ENCODE measurements at regions of chr12 and their contacts with region 1.

Region 1: DNA sequence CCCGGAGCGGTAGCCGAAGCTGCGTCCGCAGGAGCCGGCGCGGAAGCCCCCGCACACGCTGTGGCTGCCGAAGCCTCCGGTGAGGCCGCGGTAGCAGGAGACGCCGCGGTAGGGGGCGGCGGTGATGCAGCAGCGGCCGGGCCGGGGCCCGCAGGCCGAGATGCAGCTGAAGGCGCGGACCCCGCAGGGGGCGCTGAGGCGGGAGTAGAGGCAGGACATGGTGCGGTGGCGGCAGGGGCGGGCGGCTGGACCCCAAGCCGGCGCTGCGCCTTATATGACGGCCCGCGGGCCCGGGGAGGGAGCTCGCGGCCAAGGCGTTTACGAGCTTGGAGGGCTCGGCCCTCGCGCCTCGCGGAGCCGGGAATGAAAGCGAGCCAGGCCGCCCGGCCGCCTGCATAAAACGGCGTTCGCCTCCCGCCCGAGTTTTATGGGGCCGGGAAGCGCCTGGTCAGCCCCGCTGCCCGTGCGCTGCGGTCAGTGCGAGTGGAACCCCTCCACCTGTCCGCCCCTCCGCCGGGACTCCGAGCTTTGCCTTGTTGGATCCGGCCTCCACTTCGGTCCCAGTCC is 16.0 kb upstream of the KRT86 start:
- DNase-seq: peak; percentile 82
- H3K4me3 ChIP-seq: peak overlapping the region in 1 of 2 experiments; percentile 17; a peak in 1 of 4 replicates
- H3K27ac ChIP-seq: no peak overlapping the region
- H3K4me1 ChIP-seq: peaks cover 3 to 16% of the 10 kb centered on the region in 2 experiments; a peak in 3 of 4 replicates
- H3K27me3 ChIP-seq: no peaks in the 10 kb centered on the region
- CTCF ChIP-seq: no peak
- EP300 ChIP-seq: no peak
- RAD21 ChIP-seq: no peak

Region 2: DNA sequence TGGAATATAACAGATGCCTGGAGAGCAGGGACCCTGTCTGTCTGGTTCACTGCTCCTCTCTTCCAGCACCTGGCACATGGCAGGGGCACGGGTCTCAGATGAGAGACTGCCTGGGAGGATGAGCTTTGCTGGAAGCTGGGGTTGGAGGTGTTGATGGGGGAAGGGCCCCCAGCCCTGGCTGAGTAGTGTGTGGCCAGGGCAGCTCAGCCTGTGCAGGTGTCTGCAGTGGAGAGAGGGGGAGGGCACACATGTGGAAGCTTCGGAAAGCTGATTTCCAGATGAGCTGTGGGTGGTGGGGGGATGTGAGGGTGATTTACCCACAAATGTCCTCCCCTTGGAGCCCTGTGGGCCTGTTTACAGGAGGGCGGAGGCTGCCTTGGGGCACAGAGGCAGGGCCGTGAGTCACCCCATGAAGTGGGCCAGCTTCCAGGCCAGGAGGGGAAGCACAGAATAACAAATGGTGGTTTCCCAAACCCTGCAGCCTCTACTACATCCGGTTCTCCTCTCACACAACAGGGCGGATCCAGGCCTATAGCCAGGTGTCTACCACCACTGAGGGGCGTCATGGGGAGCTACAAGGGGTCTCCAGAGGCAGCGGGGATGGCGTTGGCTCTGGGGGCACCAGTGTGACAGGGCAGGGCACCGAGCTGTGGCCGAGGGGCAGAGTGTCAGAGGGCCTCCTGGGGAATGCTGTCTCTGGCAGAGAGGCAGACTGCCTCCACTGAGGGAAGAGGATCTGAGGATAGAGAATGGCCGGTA is 14.4 kb before region 1 on chr12:
- CTCF ChIA-PET with region 1: interaction called, 10 read pairs
- POLR2A ChIA-PET with region 1: no interaction called
- DNase-seq: peak; percentile 60
- H3K4me3 ChIP-seq: no peak overlapping the region
- H3K27ac ChIP-seq: peak overlapping the region; percentile 71 to 91
- H3K4me1 ChIP-seq: peaks cover 23 to 24% of the 10 kb centered on the region in 2 experiments; a peak in 3 of 4 replicates
- H3K27me3 ChIP-seq: no peaks in the 10 kb centered on the region
- CTCF ChIP-seq: no peak
- EP300 ChIP-seq: no peak; a peak in 1 of 4 replicates
- RAD21 ChIP-seq: no peak